ENCODE measurements at regions of chr5 and their contacts with region 1.

Region 1: DNA sequence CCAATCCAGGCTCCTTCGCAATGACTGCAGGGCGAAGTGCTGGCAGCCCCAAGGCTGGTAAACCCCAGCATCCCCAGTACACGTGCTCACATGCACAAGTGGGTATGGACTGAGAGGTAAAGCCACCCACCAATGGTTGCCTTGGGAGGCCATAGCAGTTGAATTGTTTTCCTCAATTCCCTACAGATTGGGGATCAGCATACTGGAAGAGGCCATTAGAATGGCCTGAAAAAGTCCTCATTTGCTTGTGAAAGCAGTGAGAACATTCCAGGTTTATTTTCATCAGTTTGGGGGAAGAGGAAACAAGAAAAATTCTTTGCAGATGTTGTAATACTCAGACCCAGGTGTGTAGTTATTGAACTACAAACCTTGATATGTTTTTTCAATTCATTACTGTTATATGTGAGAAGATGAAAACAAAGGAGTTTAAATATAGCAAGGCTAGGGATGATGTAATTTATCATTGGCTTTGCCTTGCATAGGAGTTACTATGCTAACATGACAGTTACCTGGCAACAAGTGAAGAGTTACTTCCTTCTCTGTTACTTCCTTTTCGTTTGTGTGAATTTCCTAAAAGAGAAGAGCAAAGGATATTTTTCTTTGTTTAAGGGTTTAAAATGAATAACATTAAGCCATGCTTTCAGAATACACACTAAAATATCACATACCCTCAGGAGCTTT is 36.4 kb downstream of the MTMR12 start:
- DNase-seq: no peak
- H3K4me3 Mint-ChIP-seq: no peak overlapping the region
- H3K27ac Mint-ChIP-seq: peak overlapping the region; percentile 60
- H3K4me1 Mint-ChIP-seq: peaks cover 38% of the 10 kb centered on the region
- H3K27me3 Mint-ChIP-seq: no peaks in the 10 kb centered on the region
- CTCF ChIP-seq: no peak

Region 2: DNA sequence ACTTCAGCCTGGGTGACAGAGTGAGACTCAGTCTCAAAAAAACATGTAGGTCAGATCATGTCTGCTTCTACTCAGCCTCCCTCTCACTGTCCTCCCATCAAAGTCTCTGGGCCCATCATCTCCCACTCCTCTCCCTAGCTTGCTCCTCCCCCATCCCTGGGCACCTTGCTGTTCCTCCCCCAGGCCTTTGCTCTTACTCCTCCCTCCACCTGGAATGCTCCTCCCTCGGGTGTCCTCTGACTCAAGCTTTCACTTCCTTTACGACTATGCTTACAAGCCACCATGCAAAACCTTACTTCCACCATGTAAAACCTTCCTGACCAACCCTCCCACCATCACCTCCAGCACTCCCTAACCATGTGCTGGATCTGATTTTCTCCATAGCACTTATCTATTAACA is 15.1 kb before region 1 on chr5:
- CTCF ChIA-PET with region 1: no interaction called
- intact Hi-C with region 1: loop called (anchors 1 kb)
- DNase-seq: no peak
- H3K4me3 Mint-ChIP-seq: no peak overlapping the region
- H3K27ac Mint-ChIP-seq: peak overlapping the region; percentile 7
- H3K4me1 Mint-ChIP-seq: peaks cover 9% of the 10 kb centered on the region
- H3K27me3 Mint-ChIP-seq: no peaks in the 10 kb centered on the region
- CTCF ChIP-seq: no peak

Region 3: GRCh38 chr5:32329308-32329834 is 53.1 kb after region 1 on chr5:
- CTCF ChIA-PET with region 1: interaction called, 3 read pairs
- intact Hi-C with region 1: loop called (anchors 5 kb)
- DNase-seq: peak; percentile 76
- H3K4me3 Mint-ChIP-seq: no peak overlapping the region
- H3K27ac Mint-ChIP-seq: peak overlapping the region; percentile 44
- H3K4me1 Mint-ChIP-seq: peaks cover 53% of the 10 kb centered on the region
- H3K27me3 Mint-ChIP-seq: no peaks in the 10 kb centered on the region
- CTCF ChIP-seq: peak; percentile 50

Measured in Calu3 (cell line).